Activated CD4-positive, alpha-beta memory T cell treated with anti-CD3 and anti-CD28 coated beads, Interleukin-2, amount 10 ng/mL, durations not matched to agents 7 days and 5 days (primary cell): ENCODE measurements at regions of chr9 and their contacts with region 1.

Region 1: GRCh38 chr9:95510709-95511615 is 5.8 kb downstream of the PTCH1 start:
- DNase-seq: peak; percentile 89
- H3K4me3 Mint-ChIP-seq: peak overlapping the region; percentile 79
- H3K27ac Mint-ChIP-seq: peak overlapping the region; percentile 74
- H3K4me1 Mint-ChIP-seq: peaks cover 37% of the 10 kb centered on the region
- H3K27me3 Mint-ChIP-seq: peaks cover 55% of the 10 kb centered on the region

Region 2: DNA sequence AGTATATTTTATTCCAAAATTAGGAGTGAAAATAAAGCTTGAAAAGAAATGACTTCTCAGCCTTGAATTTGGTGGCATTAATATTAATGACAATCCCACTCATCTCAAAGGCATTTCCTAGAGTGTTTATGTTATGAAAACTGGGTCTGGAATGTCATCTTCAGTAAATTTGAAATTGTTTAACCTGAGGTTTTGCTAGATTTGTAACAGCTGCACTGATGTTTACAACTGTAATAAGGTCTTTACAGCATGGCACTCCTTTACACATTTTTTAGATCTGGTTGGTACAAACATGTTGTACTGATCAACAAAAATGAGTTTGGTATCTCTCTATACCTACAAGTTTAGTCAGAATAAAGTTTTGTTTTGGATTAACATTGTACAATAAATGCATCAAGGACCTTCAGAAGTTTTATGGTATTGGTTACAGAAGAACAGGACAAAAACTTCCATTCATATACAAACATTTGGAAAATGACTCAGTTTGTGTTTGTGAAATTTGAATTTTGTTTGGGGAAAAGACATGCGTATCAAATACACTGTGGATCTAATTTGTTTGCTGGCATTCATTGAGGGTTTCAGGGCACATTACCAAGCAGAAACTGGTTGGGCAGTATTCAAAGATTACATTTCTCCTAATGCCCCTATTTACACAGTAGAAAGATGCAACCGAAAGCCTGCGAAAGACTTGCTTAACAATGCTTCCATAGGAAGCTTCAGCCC is 205.0 kb before region 1 on chr9:
- CTCF ChIA-PET with region 1: no interaction called
- POLR2A ChIA-PET with region 1: no interaction called
- DNase-seq: no peak
- H3K4me3 Mint-ChIP-seq: no peak overlapping the region
- H3K27ac Mint-ChIP-seq: no peak overlapping the region
- H3K4me1 Mint-ChIP-seq: peaks cover 13% of the 10 kb centered on the region
- H3K27me3 Mint-ChIP-seq: no peaks in the 10 kb centered on the region

Region 3: GRCh38 chr9:95494416-95495371 is 16.3 kb before region 1 on chr9:
- CTCF ChIA-PET with region 1: interaction called, 4 read pairs
- POLR2A ChIA-PET with region 1: interaction called, 31 read pairs
- DNase-seq: peak; percentile 88
- H3K4me3 Mint-ChIP-seq: peak overlapping the region; percentile 74
- H3K27ac Mint-ChIP-seq: peak overlapping the region; percentile 98
- H3K4me1 Mint-ChIP-seq: peaks cover 65% of the 10 kb centered on the region
- H3K27me3 Mint-ChIP-seq: peaks cover 10% of the 10 kb centered on the region